ENCODE measurements at regions of chr1 and their contacts with region 1.

Region 1: GRCh38 chr1:246214708-246215509 is 292.2 kb downstream of the SMYD3 start:
- DNase-seq: no peak

Region 2: DNA sequence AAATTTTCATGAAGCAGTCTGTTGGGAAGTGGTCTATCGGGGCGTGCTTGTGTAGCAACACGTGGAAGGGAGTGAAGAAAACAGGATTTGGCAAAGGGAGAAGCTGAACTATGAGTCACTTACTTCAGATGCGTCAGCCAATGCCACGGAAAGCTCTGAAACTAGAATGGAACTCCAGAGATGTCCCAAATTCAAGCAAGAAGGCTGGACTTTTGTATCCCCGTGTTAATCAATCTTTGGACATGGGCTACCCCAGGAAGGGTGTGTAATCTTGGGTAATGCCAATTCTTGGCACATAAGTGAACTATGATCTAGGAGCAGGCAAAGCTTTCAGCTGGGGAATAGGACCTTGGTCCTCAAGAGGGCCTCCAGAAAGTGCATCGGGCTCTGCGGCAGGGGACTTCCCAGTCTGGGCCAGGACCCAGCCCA is 1865.8 kb before region 1 on chr1:
- intact Hi-C with region 1: loop called in 1 of 2 experiments (anchors 5 kb)
- DNase-seq: no peak

Region 3: GRCh38 chr1:246020211-246020954 is 194.5 kb before region 1 on chr1:
- intact Hi-C with region 1: loop called in 1 of 2 experiments (anchors 5 kb)
- DNase-seq: no peak

Measured in posterior vena cava (tissue), 2 donors.